Caco-2 (cell line): ENCODE measurements at regions of chr14 and their contacts with region 1.

Region 1: DNA sequence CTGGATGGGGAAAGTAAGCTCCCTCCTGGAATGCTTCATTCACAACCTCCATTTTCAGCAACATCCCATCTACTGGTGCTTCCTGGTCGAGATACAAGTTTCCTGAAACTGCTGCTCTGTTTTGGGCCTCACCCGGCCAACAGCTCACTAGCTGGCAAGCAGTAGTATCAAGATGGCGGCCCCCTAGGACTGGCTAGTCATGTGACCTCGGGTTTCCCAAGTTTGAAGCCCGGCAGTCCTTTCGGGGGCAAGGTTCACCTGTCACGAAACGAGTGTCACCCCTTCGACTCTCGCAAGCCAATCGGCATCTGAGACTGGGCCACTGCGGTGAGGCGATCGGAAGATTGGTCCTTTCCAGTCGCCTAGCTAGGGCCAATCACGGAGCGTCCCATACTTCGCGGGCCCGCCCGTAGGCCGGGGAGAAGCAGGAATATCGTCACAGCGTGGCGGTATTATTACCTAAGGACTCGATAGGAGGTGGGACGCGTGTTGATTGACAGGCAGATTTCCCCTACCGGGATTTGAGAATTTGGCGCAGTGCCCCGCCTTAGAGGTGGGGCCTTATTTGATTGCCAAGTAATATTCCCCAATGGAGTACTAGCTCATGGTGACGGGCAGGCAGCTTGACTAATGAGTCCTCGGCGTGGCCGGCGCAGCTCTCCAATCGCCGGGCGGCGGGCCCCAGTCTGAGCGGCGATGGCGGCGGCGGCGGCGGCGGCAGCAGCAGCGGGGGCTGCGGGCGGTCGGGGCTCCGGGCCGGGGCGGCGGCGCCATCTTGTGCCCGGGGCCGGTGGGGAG is at the start of gene PABPN1:
- DNase-seq: peak; percentile 98 to 99
- H3K4me3 ChIP-seq: peak within 1 kb of the TSS; percentile 94
- H3K4me3 Mint-ChIP-seq: peak within 1 kb of the TSS; percentile 96
- H3K27ac Mint-ChIP-seq: peak within 1 kb of the TSS; percentile 96
- H3K4me1 ChIP-seq: peaks cover 10% of the 10 kb centered on the region
- H3K4me1 Mint-ChIP-seq: peaks cover 17% of the 10 kb centered on the region
- H3K27me3 ChIP-seq: no peaks in the 10 kb centered on the region
- H3K27me3 Mint-ChIP-seq: no peaks in the 10 kb centered on the region
- CTCF ChIP-seq: no peak
- total RNA-seq, gene PABPN1: 196 and 202 TPM in 2 replicates

Region 2: GRCh38 chr14:22606380-22606779 is 714.6 kb before region 1 on chr14:
- CTCF ChIA-PET with region 1: no interaction called
- POLR2A ChIA-PET with region 1: no interaction called
- intact Hi-C with region 1: loop called (anchors 5 kb)
- DNase-seq: peak; percentile 71 to 82
- H3K4me3 ChIP-seq: no peak overlapping the region
- H3K4me3 Mint-ChIP-seq: peak overlapping the region; percentile 45
- H3K27ac Mint-ChIP-seq: peak overlapping the region; percentile 92
- H3K4me1 ChIP-seq: peaks cover 69% of the 10 kb centered on the region
- H3K4me1 Mint-ChIP-seq: peaks cover 43% of the 10 kb centered on the region
- H3K27me3 ChIP-seq: no peaks in the 10 kb centered on the region
- H3K27me3 Mint-ChIP-seq: no peaks in the 10 kb centered on the region
- CTCF ChIP-seq: no peak

Region 3: GRCh38 chr14:23095196-23096108 is 225.5 kb before region 1 on chr14 and contains the start of gene C14orf119:
- CTCF ChIA-PET with region 1: interaction called, 4 read pairs
- POLR2A ChIA-PET with region 1: interaction called, 12 read pairs
- intact Hi-C with region 1: no loop called
- DNase-seq: peak; percentile 98 to 99
- H3K4me3 ChIP-seq: peak within 1 kb of the TSS; percentile 79
- H3K4me3 Mint-ChIP-seq: no peak within 1 kb of the TSS
- H3K27ac Mint-ChIP-seq: no peak within 1 kb of the TSS
- H3K4me1 ChIP-seq: peaks cover 3% of the 10 kb centered on the region; the same call in 1 of the 2 replicates
- H3K4me1 Mint-ChIP-seq: peaks cover 10% of the 10 kb centered on the region
- H3K27me3 ChIP-seq: no peaks in the 10 kb centered on the region
- H3K27me3 Mint-ChIP-seq: no peaks in the 10 kb centered on the region
- CTCF ChIP-seq: no peak
- total RNA-seq, gene C14orf119: 46.3 and 52.0 TPM in 2 replicates

Region 4: DNA sequence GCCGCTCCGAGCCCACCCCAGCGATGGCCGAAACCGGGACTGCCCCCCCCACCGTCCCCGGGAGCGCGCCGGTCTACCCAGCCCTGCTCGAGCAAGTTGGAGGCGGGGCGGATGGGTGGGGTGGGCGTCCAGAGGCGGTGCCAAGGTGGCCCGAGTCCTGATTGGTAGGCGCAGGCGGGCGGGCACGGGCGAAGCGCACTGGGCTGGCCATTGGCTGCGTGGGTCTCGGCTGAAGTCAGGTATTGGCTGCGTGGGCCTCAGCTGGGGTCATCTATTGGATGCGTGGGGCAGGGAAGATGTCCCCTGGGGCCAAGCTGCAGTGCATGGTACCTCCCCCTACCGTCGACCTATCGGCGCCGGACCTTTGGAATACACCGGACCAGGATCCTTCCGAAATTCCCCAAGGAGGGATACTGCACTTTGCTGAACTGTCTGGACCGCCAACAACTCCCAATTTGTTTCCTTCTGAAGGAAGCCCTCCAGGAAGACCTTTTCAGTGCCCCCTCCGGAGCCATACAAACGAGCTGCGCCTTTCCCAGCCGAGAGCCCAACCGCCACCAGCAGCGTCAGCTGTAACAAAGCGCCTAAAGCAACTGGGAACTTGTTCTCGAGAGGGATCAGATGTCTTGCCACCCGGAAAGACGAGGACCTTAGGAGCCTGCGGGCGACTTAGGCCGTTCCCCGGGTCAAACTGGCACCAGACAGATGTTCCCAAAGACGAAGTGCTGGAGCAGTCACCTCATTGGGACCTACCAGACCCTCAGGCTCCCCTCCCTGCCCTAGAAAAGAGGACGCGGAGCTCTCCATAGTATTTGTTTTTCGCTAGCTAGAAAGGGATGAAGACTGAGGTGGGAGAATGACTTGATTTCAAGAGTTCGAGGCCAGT is 34.7 kb before region 1 on chr14 and contains the start of gene HOMEZ:
- CTCF ChIA-PET with region 1: interaction called, 9 read pairs
- POLR2A ChIA-PET with region 1: interaction called, 31 read pairs
- intact Hi-C with region 1: loop called (anchors 1 kb)
- DNase-seq: peak; percentile 99
- H3K4me3 ChIP-seq: peak within 1 kb of the TSS; percentile 75
- H3K4me3 Mint-ChIP-seq: peak within 1 kb of the TSS; percentile 90
- H3K27ac Mint-ChIP-seq: peak within 1 kb of the TSS; percentile 95
- H3K4me1 ChIP-seq: 0 out of 2 replicates have a peak, but pooled peaks cover 4% of the 10 kb centered on the region
- H3K4me1 Mint-ChIP-seq: peaks cover 6% of the 10 kb centered on the region
- H3K27me3 ChIP-seq: no peaks in the 10 kb centered on the region
- H3K27me3 Mint-ChIP-seq: no peaks in the 10 kb centered on the region
- CTCF ChIP-seq: peak in 1 of 2 experiments; percentile 18
- total RNA-seq, gene HOMEZ: 7.4 and 7.6 TPM in 2 replicates

Region 5: DNA sequence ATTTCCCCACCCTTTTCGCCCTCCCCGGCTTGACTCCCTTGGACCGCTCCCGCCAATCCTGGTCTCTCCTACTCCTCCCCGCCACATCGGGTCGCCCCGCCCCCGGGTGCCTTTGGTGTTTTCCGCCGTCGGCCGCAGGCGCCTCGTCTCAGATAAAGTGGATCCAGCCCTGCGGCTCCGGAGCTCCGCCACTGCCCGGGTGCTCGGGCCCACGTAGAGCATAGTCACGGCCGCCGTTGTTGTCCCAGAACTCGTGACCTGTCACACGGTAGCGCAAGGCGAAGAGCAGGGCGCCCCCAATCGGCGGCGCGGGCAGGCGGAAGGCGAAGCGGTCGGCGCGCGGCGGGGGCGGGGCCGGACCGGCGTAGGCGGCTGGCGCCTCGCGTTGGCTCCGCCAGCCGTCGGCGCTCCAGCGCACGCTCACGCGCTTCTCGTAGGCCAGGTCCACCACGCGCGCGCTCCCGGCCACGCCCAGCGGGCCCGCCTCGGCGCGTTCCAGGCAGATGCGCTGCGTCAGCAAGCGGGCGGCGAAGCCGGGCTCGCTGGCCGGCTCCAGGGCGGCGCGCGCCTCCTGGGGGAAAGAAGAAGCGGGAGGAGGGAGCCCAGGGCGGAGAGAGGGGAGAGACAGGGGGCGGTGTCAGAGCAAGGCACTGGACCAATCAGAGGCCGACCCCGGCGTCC is 19.5 kb before region 1 on chr14:
- CTCF ChIA-PET with region 1: interaction called, 15 read pairs
- POLR2A ChIA-PET with region 1: interaction called, 51 read pairs
- intact Hi-C with region 1: loop called (anchors 1 kb)
- DNase-seq: peak; percentile 97 to 99
- H3K4me3 ChIP-seq: peak overlapping the region; percentile 71
- H3K4me3 Mint-ChIP-seq: peak overlapping the region; percentile 100
- H3K27ac Mint-ChIP-seq: peak overlapping the region; percentile 90
- H3K4me1 ChIP-seq: peaks cover 18% of the 10 kb centered on the region; the same call in 1 of the 2 replicates
- H3K4me1 Mint-ChIP-seq: peaks cover 7% of the 10 kb centered on the region
- H3K27me3 ChIP-seq: no peaks in the 10 kb centered on the region
- H3K27me3 Mint-ChIP-seq: no peaks in the 10 kb centered on the region
- CTCF ChIP-seq: peak; percentile 66 to 74

Region 6: DNA sequence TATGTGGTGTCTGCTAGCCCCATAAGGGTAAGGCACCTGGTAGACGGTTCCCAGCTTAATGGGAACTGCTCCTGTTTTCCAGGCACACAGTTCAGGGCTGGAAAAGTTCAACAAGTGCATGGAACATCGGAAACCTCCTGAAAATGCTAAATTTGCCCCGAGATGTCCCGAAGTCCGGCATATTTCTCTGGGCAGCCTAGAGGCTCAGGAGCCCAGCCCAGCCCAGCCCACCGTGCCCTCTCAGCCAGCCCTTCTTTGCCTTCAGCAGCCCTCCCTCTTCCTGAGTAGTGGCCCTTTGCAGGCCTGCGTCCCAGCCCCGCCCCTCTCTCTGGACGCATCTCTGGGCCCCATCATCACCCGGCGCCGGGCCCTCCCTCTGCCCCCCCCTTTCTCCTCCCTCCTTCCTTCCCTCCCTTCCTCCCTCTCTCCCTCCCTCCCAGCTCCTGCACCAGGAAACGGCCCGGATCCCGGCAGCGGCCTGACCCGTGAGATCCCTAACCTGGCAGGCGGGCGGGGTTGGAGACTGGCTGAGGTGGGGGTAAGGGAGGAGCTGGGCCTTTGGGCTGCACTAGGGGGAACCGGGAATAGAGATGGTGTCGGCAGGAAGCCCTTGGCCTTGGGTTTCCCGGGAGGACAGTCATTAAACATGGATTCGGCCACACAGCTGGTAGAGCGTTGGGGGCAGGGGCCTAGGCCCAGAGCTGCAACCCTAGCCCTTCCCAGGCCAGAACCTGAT is 14.4 kb before region 1 on chr14 and contains the start of gene BCL2L2:
- CTCF ChIA-PET with region 1: interaction called, 15 read pairs
- POLR2A ChIA-PET with region 1: interaction called, 51 read pairs
- intact Hi-C with region 1: loop called (anchors 1 kb)
- DNase-seq: peak; percentile 91 to 94
- H3K4me3 ChIP-seq: peak within 1 kb of the TSS; percentile 68
- H3K4me3 Mint-ChIP-seq: peak within 1 kb of the TSS; percentile 75
- H3K27ac Mint-ChIP-seq: peak within 1 kb of the TSS; percentile 78
- H3K4me1 ChIP-seq: peaks cover 15% of the 10 kb centered on the region; the same call in 1 of the 2 replicates
- H3K4me1 Mint-ChIP-seq: peaks cover 14% of the 10 kb centered on the region
- H3K27me3 ChIP-seq: no peaks in the 10 kb centered on the region
- H3K27me3 Mint-ChIP-seq: no peaks in the 10 kb centered on the region
- CTCF ChIP-seq: no peak
- total RNA-seq, gene BCL2L2: 19.1 and 20.8 TPM in 2 replicates

Region 7: GRCh38 chr14:23469127-23469905 is 148.3 kb after region 1 on chr14 and contains the start of gene NGDN:
- CTCF ChIA-PET with region 1: interaction called, 6 read pairs
- POLR2A ChIA-PET with region 1: interaction called, 5 read pairs
- intact Hi-C with region 1: loop called (anchors 5 kb)
- DNase-seq: peak; percentile 96 to 97
- H3K4me3 ChIP-seq: peak within 1 kb of the TSS; percentile 87
- H3K4me3 Mint-ChIP-seq: no peak within 1 kb of the TSS
- H3K27ac Mint-ChIP-seq: no peak within 1 kb of the TSS
- H3K4me1 ChIP-seq: peaks cover 15% of the 10 kb centered on the region
- H3K4me1 Mint-ChIP-seq: peaks cover 12% of the 10 kb centered on the region
- H3K27me3 ChIP-seq: no peaks in the 10 kb centered on the region
- H3K27me3 Mint-ChIP-seq: no peaks in the 10 kb centered on the region
- CTCF ChIP-seq: peak; percentile 81 to 83
- total RNA-seq, gene NGDN: 54.5 and 55.0 TPM in 2 replicates

Region 8: DNA sequence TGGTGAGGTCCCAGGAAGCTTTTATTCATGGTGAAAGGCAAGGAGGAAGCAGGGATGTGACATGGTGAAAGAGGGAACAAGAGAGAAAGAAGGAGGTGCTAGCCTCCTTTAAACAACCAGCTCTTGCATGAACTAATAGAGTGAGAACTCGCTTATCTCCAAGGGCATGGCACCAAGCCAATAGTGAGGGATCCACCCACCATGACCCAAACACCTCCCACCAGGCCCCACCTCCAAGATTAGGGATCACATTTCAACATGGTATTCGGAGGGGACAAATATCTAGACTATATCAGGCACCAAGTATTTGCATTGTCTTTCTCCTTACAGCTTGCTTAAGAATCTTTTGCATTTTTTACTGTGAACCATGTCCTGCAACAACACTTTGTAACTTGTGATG is 540.7 kb after region 1 on chr14:
- CTCF ChIA-PET with region 1: no interaction called
- POLR2A ChIA-PET with region 1: no interaction called
- intact Hi-C with region 1: no loop called
- DNase-seq: no peak
- H3K4me3 ChIP-seq: no peak overlapping the region
- H3K4me3 Mint-ChIP-seq: no peak overlapping the region
- H3K27ac Mint-ChIP-seq: no peak overlapping the region
- H3K4me1 ChIP-seq: no peaks in the 10 kb centered on the region
- H3K4me1 Mint-ChIP-seq: no peaks in the 10 kb centered on the region
- H3K27me3 ChIP-seq: no peaks in the 10 kb centered on the region
- H3K27me3 Mint-ChIP-seq: no peaks in the 10 kb centered on the region
- CTCF ChIP-seq: no peak